Endothelial cell of umbilical vein (primary cell): ENCODE measurements at regions of chr12 and their contacts with region 1.

Region 1: GRCh38 chr12:17642340-17642650 is 447.7 kb downstream of the RERGL start:
- DNase-seq: no peak
- H3K4me3 ChIP-seq: no peak overlapping the region
- H3K27ac ChIP-seq: no peak overlapping the region
- H3K4me1 ChIP-seq: no peaks in the 10 kb centered on the region
- H3K27me3 ChIP-seq: no peaks in the 10 kb centered on the region
- CTCF ChIP-seq: no peak
- POLR2A ChIP-seq: no peak

Region 2: GRCh38 chr12:16076553-16076952 is 1565.7 kb before region 1 on chr12:
- CTCF ChIA-PET with region 1: interaction called, 15 read pairs
- POLR2A ChIA-PET with region 1: no interaction called
- dilution Hi-C with region 1: no loop called
- intact Hi-C with region 1: no loop called
- DNase-seq: no peak
- H3K4me3 ChIP-seq: no peak overlapping the region
- H3K27ac ChIP-seq: no peak overlapping the region
- H3K4me1 ChIP-seq: no peaks in the 10 kb centered on the region
- H3K27me3 ChIP-seq: peaks cover 0 to 6% of the 10 kb centered on the region in 2 experiments
- CTCF ChIP-seq: peak; percentile 5 to 22
- POLR2A ChIP-seq: no peak

Region 3: GRCh38 chr12:16165506-16165905 is 1476.8 kb before region 1 on chr12:
- CTCF ChIA-PET with region 1: interaction called, 31 read pairs
- POLR2A ChIA-PET with region 1: no interaction called
- dilution Hi-C with region 1: no loop called
- intact Hi-C with region 1: loop called (anchors 5 kb)
- DNase-seq: peak; percentile 33
- H3K4me3 ChIP-seq: no peak overlapping the region
- H3K27ac ChIP-seq: no peak overlapping the region
- H3K4me1 ChIP-seq: no peaks in the 10 kb centered on the region
- H3K27me3 ChIP-seq: peaks cover 0 to 3% of the 10 kb centered on the region in 2 experiments
- CTCF ChIP-seq: peak in 1 of 2 donors; percentile 29
- POLR2A ChIP-seq: no peak

Region 4: DNA sequence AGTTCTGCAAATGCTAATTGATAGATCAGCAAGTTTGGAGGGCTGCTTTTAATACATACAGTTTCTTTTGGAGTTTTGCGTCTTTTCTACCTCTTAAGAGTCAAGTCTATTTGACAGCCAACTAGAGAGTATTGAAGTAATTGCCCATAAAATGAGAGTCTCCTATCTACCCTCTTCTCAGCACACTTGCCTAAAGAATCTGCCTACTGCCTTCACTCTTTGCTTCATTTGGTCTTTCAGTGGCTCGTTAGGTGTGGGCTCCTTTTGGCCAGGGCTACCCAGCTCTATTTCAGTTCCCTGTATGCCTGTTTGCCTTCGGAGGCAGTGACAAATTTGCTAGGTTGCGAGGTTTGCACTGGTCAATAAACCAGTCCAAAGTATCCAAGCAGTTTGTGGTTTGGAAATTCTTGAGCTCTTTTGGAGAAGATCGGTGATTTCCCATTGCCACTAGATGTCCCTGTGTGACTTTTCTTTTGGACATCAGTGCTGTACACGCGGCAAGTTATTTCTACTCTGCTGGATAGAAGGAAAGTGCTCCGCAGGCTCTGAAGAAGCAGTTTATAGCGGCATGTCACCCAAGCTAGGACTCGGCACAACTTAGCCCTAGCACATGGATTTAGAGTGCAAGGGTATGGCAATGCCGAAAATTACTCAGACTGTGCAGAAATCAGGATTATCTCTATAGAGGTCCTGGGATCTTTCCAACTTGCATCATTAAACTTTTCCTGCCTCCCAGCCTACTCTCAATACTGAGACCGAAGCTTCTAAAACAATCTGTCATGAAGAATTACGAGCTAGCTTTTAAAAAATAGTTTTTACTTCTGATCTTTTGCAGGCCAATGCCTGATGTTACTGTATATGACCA is 1256.3 kb before region 1 on chr12:
- CTCF ChIA-PET with region 1: interaction called, 67 read pairs
- POLR2A ChIA-PET with region 1: no interaction called
- dilution Hi-C with region 1: no loop called
- intact Hi-C with region 1: loop called (anchors 1 kb)
- DNase-seq: peak; percentile 50
- H3K4me3 ChIP-seq: no peak overlapping the region
- H3K27ac ChIP-seq: no peak overlapping the region
- H3K4me1 ChIP-seq: no peaks in the 10 kb centered on the region
- H3K27me3 ChIP-seq: no peaks in the 10 kb centered on the region
- CTCF ChIP-seq: peak; percentile 28 to 44
- POLR2A ChIP-seq: no peak

Region 5: DNA sequence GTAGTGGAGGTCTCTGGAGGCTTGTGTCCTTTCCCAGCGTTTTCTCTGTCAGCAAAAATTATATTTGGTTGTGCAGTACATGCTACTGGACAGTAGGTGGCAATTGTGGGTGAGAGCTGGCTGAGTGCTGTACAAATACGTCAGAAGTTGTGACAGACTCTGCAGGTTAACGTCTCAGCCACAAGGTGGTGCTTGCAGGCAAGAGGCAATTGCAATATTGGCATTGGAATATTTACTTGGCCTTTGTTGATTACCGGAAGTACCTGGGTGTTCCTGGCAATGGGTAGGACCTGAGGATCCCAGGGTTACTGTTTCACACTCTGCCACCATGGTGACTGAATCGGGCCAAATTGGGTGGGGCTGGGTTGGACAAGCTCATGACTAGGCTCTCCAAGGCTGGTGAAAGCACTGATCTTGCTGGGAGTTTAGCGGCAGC is 702.4 kb before region 1 on chr12:
- CTCF ChIA-PET with region 1: no interaction called
- POLR2A ChIA-PET with region 1: no interaction called
- dilution Hi-C with region 1: no loop called
- intact Hi-C with region 1: loop called (anchors 5 kb)
- DNase-seq: peak; percentile 4
- H3K4me3 ChIP-seq: no peak overlapping the region
- H3K27ac ChIP-seq: no peak overlapping the region
- H3K4me1 ChIP-seq: no peaks in the 10 kb centered on the region
- H3K27me3 ChIP-seq: no peaks in the 10 kb centered on the region
- CTCF ChIP-seq: peak; percentile 50 to 70
- POLR2A ChIP-seq: no peak

Region 6: DNA sequence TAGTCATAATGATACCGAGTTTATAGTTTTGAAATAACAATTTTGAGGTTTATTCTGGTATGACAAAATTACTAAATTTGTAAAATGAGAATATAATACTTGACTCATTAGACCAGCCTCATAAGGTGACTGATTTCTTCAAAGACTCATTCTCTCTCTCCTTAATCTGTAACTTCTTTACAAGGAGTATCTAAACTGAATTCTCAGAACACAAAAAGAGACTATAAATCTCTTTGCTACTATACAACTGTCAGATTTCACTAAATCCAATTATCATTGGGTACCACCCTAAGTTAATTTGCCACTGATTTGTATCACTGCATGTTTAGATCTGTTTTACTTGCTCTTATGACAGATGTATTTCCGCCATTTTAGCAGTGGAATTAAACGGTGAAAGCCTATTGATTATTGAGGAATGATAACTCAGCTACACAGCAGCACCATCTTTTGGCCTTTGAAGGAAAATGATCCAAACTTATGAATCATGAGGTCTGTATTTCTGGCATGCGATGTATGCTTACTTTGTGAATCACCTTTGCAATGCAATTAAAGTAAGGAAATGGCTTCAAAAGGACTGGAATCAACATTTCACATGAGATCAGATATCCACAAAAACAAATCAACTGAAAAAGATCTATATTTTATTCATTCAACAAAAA is 286.5 kb after region 1 on chr12:
- CTCF ChIA-PET with region 1: interaction called, 3 read pairs
- POLR2A ChIA-PET with region 1: no interaction called
- dilution Hi-C with region 1: no loop called
- intact Hi-C with region 1: loop called (anchors 2 kb)
- DNase-seq: peak; percentile 90
- H3K4me3 ChIP-seq: peak overlapping the region in 1 of 3 experiments; percentile 48
- H3K27ac ChIP-seq: peak overlapping the region; percentile 90
- H3K4me1 ChIP-seq: peaks cover 23% of the 10 kb centered on the region
- H3K27me3 ChIP-seq: no peaks in the 10 kb centered on the region
- CTCF ChIP-seq: peak in 1 of 2 donors; percentile 19
- POLR2A ChIP-seq: no peak

Region 7: GRCh38 chr12:17992002-17992656 is 349.8 kb after region 1 on chr12:
- CTCF ChIA-PET with region 1: interaction called, 6 read pairs
- POLR2A ChIA-PET with region 1: no interaction called
- dilution Hi-C with region 1: no loop called
- intact Hi-C with region 1: loop called (anchors 5 kb)
- DNase-seq: peak; percentile 57
- H3K4me3 ChIP-seq: no peak overlapping the region
- H3K27ac ChIP-seq: no peak overlapping the region
- H3K4me1 ChIP-seq: no peaks in the 10 kb centered on the region
- H3K27me3 ChIP-seq: no peaks in the 10 kb centered on the region
- CTCF ChIP-seq: peak; percentile 50 to 66
- POLR2A ChIP-seq: no peak